GM10248 (cell line): ENCODE measurements at regions of chr14 and their contacts with region 1.

Region 1: GRCh38 chr14:81269100-81269978 is 48.6 kb upstream of the GTF2A1 start:
- DNase-seq: peak; percentile 74
- CTCF ChIP-seq: peak; percentile 67

Region 2: DNA sequence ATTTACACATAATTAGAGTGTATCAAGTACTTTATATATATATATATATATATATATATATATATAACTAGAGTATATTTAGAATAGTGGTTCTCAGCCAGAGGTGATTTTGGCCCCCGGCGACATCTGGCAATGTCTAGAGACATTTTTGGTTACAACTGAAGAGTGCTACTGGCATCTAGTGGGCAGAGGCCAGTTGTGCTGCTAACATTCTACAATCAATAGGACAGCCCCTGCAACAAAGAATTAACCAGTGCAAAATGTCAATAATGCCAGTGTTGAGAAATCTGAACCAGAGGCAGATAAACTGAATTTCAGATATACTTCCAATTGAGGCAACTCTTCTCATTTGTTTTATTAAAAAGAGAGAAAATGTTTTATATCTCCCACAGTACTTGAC is 57.5 kb before region 1 on chr14:
- CTCF ChIA-PET with region 1: no interaction called
- POLR2A ChIA-PET with region 1: no interaction called
- DNase-seq: no peak
- CTCF ChIP-seq: peak; percentile 43

Region 3: GRCh38 chr14:81247146-81247766 is 22.1 kb before region 1 on chr14:
- CTCF ChIA-PET with region 1: interaction called, 24 read pairs
- POLR2A ChIA-PET with region 1: no interaction called
- DNase-seq: no peak
- CTCF ChIP-seq: no peak

Region 4: GRCh38 chr14:81252273-81252672 is 17.1 kb before region 1 on chr14:
- CTCF ChIA-PET with region 1: interaction called, 24 read pairs
- POLR2A ChIA-PET with region 1: no interaction called
- DNase-seq: no peak
- CTCF ChIP-seq: no peak

Region 5: GRCh38 chr14:81464247-81465002 is 195.1 kb after region 1 on chr14:
- CTCF ChIA-PET with region 1: interaction called, 66 read pairs
- POLR2A ChIA-PET with region 1: no interaction called
- DNase-seq: peak; percentile 66
- CTCF ChIP-seq: peak; percentile 83